Activated CD4-positive, alpha-beta memory T cell treated with anti-CD3 and anti-CD28 coated beads for 36 hours (primary cell): ENCODE measurements at regions of chr6 and their contacts with region 1.

Region 1: GRCh38 chr6:151475653-151476523 is 17.9 kb upstream of the CCDC170 start:
- DNase-seq: peak; percentile 38
- H3K4me3 Mint-ChIP-seq: no peak overlapping the region
- H3K27ac Mint-ChIP-seq: no peak overlapping the region
- H3K4me1 Mint-ChIP-seq: peaks cover 5% of the 10 kb centered on the region
- H3K27me3 Mint-ChIP-seq: no peaks in the 10 kb centered on the region

Region 2: GRCh38 chr6:151440930-151441329 is 35.0 kb before region 1 on chr6:
- CTCF ChIA-PET with region 1: no interaction called
- POLR2A ChIA-PET with region 1: no interaction called
- intact Hi-C with region 1: loop called (anchors 1 kb)
- DNase-seq: no peak
- H3K4me3 Mint-ChIP-seq: no peak overlapping the region
- H3K27ac Mint-ChIP-seq: no peak overlapping the region
- H3K4me1 Mint-ChIP-seq: peaks cover 43% of the 10 kb centered on the region
- H3K27me3 Mint-ChIP-seq: no peaks in the 10 kb centered on the region